IMR-90 (cell line): ENCODE measurements at regions of chr2 and their contacts with region 1.

Region 1: DNA sequence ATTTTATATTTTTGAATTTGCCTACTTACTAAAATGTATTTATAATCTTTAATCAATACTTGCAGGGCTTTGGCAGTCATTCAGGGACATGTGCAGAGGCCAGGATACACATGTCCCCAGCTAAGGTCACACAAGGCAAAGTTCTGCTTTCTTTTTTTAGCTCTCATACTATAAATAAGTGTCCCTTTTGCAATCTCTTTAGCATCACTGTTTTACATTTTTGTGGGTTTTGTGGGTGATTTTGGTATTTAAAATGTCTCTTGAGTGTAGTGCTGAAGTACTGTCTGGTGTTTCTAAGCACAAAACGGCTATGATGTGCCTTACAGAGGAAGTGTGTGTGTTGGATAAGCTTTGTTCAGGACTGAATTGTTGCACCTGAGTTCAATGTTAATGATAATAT is 309.0 kb upstream of the GULP1 start:
- DNase-seq: peak; percentile 92
- ATAC-seq: peak; percentile 99
- H3K4me3 ChIP-seq: no peak overlapping the region
- H3K27ac ChIP-seq: no peak overlapping the region
- H3K4me1 ChIP-seq: peaks cover 7% of the 10 kb centered on the region
- H3K27me3 ChIP-seq: no peaks in the 10 kb centered on the region
- CTCF ChIP-seq: no peak
- POLR2A ChIP-seq: no peak
- RAD21 ChIP-seq: no peak

Region 2: DNA sequence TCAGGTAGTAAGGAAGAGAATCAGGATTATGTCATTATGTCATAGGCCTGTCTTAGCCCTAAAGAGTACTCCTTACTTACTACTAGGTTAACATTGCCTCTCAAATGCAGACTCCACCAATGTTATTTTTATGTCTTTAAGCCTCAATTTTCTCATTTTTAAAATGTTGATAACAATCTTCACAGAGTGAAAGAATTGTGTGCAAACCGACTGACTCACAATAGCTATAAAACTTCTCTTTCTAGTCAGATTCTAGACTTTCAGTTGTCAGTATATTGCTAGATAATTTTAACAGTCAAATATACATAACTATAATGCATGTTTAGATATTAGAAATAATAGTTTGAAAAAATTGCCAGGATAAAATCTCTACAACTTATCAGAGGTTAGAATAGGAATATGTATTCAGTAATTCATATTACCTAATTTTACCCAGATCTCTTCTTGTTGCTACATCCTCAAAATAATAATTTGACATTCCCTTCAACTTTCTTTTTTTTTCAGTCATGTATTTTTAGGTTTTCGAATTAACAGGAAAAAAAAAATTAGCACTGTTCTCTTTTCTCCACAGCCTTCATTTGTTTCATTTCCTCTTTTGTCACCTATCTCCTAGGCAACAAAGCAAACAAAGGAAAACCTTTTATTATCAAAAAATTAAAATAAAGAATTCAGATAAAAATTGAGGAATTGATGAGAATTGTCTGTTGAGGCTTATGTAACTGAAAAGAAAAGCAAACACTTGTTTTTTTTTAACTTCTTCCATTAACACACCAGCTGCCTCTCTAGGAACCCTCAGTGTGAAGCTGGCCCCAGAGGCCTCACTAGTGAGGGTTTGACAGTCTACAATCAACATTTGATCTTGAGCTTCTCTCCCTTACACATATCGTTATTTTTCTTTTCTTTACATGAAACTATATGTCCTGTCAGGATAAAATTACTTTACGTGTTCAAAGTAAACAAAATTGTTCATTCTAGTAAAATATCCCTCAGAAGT is 813.7 kb before region 1 on chr2:
- CTCF ChIA-PET with region 1: no interaction called
- POLR2A ChIA-PET with region 1: no interaction called
- dilution Hi-C with region 1: no loop called
- in situ Hi-C with region 1: no loop called
- intact Hi-C with region 1: no loop called
- DNase-seq: no peak
- ATAC-seq: no peak
- H3K4me3 ChIP-seq: no peak overlapping the region
- H3K27ac ChIP-seq: no peak overlapping the region
- H3K4me1 ChIP-seq: no peaks in the 10 kb centered on the region
- H3K27me3 ChIP-seq: no peaks in the 10 kb centered on the region
- CTCF ChIP-seq: no peak
- POLR2A ChIP-seq: no peak
- RAD21 ChIP-seq: no peak

Region 3: GRCh38 chr2:188042412-188042811 is 59.7 kb after region 1 on chr2:
- CTCF ChIA-PET with region 1: no interaction called
- POLR2A ChIA-PET with region 1: no interaction called
- dilution Hi-C with region 1: no loop called
- in situ Hi-C with region 1: no loop called
- intact Hi-C with region 1: loop called (anchors 5 kb)
- DNase-seq: peak; percentile 82
- ATAC-seq: peak; percentile 51
- H3K4me3 ChIP-seq: no peak overlapping the region
- H3K27ac ChIP-seq: no peak overlapping the region
- H3K4me1 ChIP-seq: peaks cover 2% of the 10 kb centered on the region; the same call in 1 of the 2 replicates
- H3K27me3 ChIP-seq: no peaks in the 10 kb centered on the region
- CTCF ChIP-seq: no peak
- POLR2A ChIP-seq: no peak
- RAD21 ChIP-seq: no peak

Region 4: DNA sequence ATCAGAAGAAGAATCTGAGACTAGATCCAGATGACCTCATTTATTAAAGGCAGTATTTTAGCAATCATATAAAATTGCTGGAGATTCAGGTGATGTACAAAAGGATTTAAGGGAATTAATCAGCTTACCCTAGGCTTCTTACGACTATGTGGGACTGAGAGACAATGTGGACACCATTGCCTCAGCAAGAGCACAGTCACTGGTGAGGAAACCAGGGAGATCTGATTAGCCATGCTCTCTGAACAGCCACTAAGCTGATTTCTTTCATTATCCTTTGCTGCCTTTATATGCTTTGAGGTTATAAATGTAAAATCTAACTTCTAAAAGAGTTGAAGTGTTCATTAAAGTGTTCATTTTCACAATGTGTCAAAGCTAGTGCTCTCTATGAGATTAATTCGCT is 286.3 kb after region 1 on chr2:
- CTCF ChIA-PET with region 1: no interaction called
- POLR2A ChIA-PET with region 1: no interaction called
- dilution Hi-C with region 1: no loop called
- in situ Hi-C with region 1: no loop called
- intact Hi-C with region 1: loop called (anchors 10 kb)
- DNase-seq: no peak
- ATAC-seq: no peak
- H3K4me3 ChIP-seq: no peak overlapping the region
- H3K27ac ChIP-seq: no peak overlapping the region
- H3K4me1 ChIP-seq: no peaks in the 10 kb centered on the region
- H3K27me3 ChIP-seq: no peaks in the 10 kb centered on the region
- CTCF ChIP-seq: no peak
- POLR2A ChIP-seq: no peak
- RAD21 ChIP-seq: no peak

Region 5: DNA sequence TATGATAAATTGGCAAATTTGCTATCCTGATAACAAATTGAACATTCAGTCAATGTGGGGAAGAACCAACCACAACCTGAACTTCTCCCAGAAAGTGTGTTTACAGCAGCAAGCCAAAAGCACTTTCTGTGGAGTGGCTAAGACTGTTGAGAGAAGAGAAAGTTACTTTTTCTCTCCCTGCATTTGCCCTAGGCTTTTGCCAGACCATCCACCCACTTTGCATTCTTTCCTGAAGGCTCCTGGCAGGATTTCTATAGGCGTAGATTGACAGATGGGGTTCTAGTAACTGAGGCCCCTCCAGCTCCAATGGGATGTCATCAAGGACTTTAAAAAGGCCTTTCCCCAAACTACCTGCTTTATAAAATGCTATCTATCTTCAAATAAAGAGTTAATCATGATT is 524.2 kb after region 1 on chr2:
- CTCF ChIA-PET with region 1: no interaction called
- POLR2A ChIA-PET with region 1: no interaction called
- dilution Hi-C with region 1: no loop called
- in situ Hi-C with region 1: no loop called
- intact Hi-C with region 1: loop called (anchors 10 kb)
- DNase-seq: no peak
- ATAC-seq: no peak
- H3K4me3 ChIP-seq: no peak overlapping the region
- H3K27ac ChIP-seq: no peak overlapping the region
- H3K4me1 ChIP-seq: no peaks in the 10 kb centered on the region
- H3K27me3 ChIP-seq: no peaks in the 10 kb centered on the region
- CTCF ChIP-seq: no peak
- POLR2A ChIP-seq: no peak
- RAD21 ChIP-seq: no peak

Region 6: DNA sequence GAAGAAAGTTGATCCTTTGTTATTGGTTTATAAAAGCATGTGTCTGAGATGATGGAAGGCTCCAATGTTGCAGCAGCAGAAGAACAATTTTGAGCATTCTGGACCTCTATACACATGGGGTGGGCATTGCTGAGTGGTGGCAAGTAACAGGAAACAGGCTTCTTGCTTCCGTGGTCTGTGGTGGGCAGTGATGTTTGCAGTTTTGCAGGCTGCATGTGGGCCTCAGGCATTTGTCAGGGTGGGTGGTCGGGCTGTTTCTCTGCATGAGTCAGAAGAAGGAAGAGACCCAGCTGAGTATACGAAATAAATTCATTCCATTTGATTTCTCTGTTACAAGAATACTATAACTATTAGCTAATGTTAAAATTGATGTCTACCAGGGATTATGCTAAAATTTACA is 752.0 kb after region 1 on chr2:
- CTCF ChIA-PET with region 1: no interaction called
- POLR2A ChIA-PET with region 1: no interaction called
- dilution Hi-C with region 1: no loop called
- in situ Hi-C with region 1: no loop called
- intact Hi-C with region 1: no loop called
- DNase-seq: peak; percentile 33
- ATAC-seq: peak; percentile 24; the same call in 1 of the 2 replicates
- H3K4me3 ChIP-seq: no peak overlapping the region
- H3K27ac ChIP-seq: no peak overlapping the region
- H3K4me1 ChIP-seq: no peaks in the 10 kb centered on the region
- H3K27me3 ChIP-seq: no peaks in the 10 kb centered on the region
- CTCF ChIP-seq: no peak
- POLR2A ChIP-seq: no peak
- RAD21 ChIP-seq: no peak